Mammary epithelial cell (primary cell): ENCODE measurements at regions of chr12 and their contacts with region 1.

Region 1: GRCh38 chr12:30806989-30807694 is 52.4 kb upstream of the CAPRIN2 start:
- DNase-seq: peak; percentile 54
- H3K4me3 ChIP-seq: no peak overlapping the region
- H3K27ac ChIP-seq: no peak overlapping the region
- H3K4me1 ChIP-seq: peaks cover 14% of the 10 kb centered on the region
- H3K27me3 ChIP-seq: no peaks in the 10 kb centered on the region
- CTCF ChIP-seq: peak; percentile 70 to 76

Region 2: DNA sequence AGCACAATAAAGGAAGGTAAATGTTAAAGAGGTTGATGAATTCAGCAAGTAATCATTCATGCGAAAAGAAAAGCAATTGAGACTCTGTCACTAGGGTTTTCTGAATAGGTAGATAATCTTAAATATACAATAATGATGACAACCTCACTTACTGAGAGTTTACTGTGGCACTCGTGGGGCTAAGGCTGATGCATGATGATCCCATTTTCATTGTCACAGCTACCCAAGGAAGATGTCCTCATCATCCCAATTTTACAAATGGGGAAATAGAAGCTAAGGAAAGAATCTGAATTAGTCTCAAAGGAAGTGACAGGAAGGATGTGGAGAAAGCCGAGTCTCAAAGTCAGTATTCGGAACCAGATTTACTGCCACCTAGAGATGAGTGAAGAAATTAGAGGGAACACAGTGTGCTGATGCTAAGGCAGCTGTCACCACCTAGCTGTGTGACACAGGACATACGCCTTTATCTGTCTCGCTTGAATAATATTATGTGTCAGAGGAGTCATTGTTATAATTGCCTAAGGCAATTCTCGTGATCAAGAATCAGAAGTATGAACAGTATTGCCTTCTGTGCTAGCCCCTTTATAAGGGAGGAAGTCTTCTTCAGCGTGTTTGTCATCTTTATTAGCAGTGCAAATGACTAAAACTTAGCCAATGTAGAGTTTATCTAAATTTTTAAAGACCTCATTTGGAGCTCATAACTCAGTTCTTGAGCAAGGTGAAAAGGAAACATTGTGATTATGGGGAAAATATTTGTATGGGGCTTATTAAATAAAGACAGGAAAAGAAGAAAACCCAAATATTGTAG is 1489.4 kb before region 1 on chr12:
- CTCF ChIA-PET with region 1: no interaction called
- dilution Hi-C with region 1: no loop called
- in situ Hi-C with region 1: no loop called
- intact Hi-C with region 1: loop called (anchors 10 kb)
- DNase-seq: peak; percentile 52
- H3K4me3 ChIP-seq: no peak overlapping the region
- H3K27ac ChIP-seq: no peak overlapping the region
- H3K4me1 ChIP-seq: peaks cover 10% of the 10 kb centered on the region
- H3K27me3 ChIP-seq: no peaks in the 10 kb centered on the region
- CTCF ChIP-seq: peak; percentile 49 to 84

Region 3: DNA sequence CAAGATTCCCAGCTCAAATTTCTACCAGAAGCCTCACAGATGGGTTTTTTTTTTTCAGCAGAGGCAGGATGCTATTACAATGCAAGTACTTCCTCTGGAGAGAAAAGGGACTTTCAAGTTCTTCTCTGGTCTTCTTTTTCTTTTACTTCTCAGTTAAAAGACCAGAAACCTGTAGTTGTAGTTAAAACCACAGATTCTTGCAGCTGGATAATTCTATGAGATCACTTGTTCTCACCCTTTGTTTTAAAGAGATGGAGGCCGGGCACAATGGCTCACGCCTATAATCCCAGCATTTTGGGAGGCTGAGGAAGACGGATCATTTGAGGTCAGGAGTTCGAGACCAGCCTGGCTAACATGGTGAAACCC is 1262.1 kb before region 1 on chr12:
- CTCF ChIA-PET with region 1: no interaction called
- dilution Hi-C with region 1: no loop called
- in situ Hi-C with region 1: loop called in 1 of 2 experiments (anchors 25 kb)
- intact Hi-C with region 1: no loop called
- DNase-seq: no peak
- H3K4me3 ChIP-seq: no peak overlapping the region
- H3K27ac ChIP-seq: no peak overlapping the region
- H3K4me1 ChIP-seq: no peaks in the 10 kb centered on the region
- H3K27me3 ChIP-seq: no peaks in the 10 kb centered on the region
- CTCF ChIP-seq: no peak

Region 4: DNA sequence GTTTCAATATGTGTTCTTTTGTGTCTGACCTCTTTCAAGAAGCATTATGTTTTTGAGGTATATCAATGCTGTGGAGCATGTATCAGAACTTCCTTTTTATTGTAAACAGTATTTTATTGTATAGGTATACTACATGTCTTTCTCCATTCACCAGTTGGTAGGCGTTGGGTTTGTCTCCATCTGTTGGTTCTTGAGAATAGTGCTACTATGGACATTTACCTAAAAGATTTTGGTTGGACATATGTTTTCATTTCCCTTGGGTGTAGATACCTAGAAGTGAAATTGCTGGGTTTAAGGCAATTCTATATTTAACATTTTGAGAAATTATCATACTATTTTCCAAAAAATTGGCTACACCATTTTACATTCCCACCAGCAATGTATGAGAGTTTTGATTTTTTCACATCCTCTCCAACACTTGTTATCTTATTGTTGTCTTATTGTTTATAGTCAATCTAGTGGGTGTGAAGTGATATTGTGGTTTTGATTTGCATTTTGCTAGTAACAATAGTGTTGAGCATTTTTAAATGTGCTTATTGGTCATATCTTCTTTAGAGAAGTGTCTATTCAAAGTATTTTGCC is 520.7 kb before region 1 on chr12:
- CTCF ChIA-PET with region 1: no interaction called
- dilution Hi-C with region 1: no loop called
- in situ Hi-C with region 1: no loop called
- intact Hi-C with region 1: loop called (anchors 2 kb)
- DNase-seq: peak; percentile 16
- H3K4me3 ChIP-seq: no peak overlapping the region
- H3K27ac ChIP-seq: no peak overlapping the region
- H3K4me1 ChIP-seq: no peaks in the 10 kb centered on the region
- H3K27me3 ChIP-seq: no peaks in the 10 kb centered on the region
- CTCF ChIP-seq: peak; percentile 69 to 75

Region 5: GRCh38 chr12:30732954-30733637 is 74.0 kb before region 1 on chr12:
- CTCF ChIA-PET with region 1: no interaction called
- dilution Hi-C with region 1: no loop called
- in situ Hi-C with region 1: no loop called
- intact Hi-C with region 1: no loop called
- DNase-seq: peak; percentile 15
- H3K4me3 ChIP-seq: no peak overlapping the region
- H3K27ac ChIP-seq: no peak overlapping the region
- H3K4me1 ChIP-seq: peaks cover 7% of the 10 kb centered on the region
- H3K27me3 ChIP-seq: no peaks in the 10 kb centered on the region
- CTCF ChIP-seq: no peak

Region 6: DNA sequence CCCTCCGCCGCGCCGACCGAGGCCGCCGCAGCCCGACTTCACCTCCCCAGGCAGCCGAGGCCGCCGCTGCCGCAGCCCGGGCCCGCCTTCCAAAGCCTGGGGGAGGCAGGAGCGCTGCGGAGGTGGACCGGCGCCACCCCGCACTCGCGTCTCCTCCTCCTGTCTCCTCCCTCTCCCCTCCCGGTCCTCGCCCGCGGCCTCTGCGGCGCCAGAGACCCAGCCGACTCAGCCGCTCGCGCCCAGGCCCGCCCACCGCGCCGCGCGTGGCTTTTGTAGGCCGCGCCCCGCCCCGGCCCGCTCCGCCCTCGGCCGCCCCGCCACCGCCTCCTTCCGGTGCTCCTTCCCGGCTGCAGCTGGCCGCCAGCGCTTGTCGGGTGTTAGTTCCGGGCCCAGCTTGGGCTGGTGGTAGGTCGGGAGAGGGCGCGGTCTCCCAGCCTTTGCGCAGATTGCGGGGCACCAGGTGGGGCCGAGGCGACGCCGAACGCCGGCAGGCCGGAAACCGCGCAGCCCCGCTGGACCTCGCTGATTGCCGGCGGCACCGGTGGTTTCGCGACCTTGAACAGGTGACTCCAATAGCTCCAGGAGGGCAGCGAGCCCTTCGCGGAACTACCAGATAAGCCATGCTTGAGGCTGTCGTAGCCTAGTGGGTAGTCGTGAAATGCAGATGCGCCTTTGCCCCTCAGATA is 52.3 kb before region 1 on chr12 and contains the start of gene CAPRIN2:
- CTCF ChIA-PET with region 1: no interaction called
- dilution Hi-C with region 1: no loop called
- in situ Hi-C with region 1: no loop called
- intact Hi-C with region 1: loop called (anchors 1 kb)
- DNase-seq: peak; percentile 96
- H3K4me3 ChIP-seq: peak within 1 kb of the TSS; percentile 84 to 94 (median 86)
- H3K27ac ChIP-seq: peak within 1 kb of the TSS; percentile 39
- H3K4me1 ChIP-seq: peaks cover 17% of the 10 kb centered on the region
- H3K27me3 ChIP-seq: no peaks in the 10 kb centered on the region
- CTCF ChIP-seq: peak; percentile 2 to 53
- total RNA-seq, gene CAPRIN2: 17.2 to 38.0 TPM